ENCODE measurements at regions of chr9 and their contacts with region 1.

Region 1: DNA sequence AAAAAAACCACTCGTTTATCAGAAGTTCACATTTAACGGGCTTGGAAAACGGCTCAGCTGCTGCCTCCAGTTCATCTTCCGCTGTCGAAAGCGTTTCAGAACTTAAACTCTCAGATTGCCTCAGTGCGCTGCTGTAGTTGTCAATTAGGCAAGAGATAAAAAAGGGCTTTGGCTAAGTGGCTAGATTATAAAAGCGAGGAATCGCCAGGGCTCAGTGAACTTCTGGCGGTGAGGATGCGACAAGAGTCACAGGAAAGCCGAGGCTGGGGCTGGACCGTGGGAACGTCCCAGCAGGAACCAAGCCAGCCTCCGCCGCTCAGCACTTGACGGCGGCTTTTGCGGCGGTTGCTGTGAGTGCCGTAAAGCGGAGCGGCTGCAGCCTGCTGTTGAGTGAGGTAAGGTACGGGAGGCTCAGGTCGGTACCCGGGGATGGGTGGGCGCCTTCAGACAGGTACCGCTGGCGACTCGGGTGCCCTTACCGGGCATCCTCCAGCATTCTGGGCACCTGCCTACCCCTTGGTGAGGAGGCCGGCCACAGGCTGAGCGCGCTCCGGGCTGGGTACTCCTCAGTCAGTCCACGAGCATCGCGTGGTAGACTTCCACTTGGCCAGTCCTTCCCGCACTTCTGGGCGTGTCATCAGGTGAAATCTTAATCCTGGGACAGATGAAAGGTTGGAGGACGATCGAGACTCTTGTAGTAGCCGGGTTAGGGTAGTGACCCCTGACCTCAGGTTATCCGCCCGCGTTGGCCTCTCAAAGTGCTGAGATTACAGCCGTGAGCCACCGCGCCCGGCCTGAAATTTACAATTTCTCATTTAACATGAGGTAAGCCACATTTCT is at the start of gene FKTN:
- DNase-seq: peak; percentile 90
- ATAC-seq: peak; percentile 98
- H3K4me3 Mint-ChIP-seq: peak within 1 kb of the TSS; percentile 94
- H3K27ac Mint-ChIP-seq: peak within 1 kb of the TSS; percentile 84
- H3K4me1 Mint-ChIP-seq: peaks cover 16% of the 10 kb centered on the region
- H3K27me3 Mint-ChIP-seq: no peaks in the 10 kb centered on the region
- CTCF ChIP-seq: no peak
- total RNA-seq, gene FKTN: 13.9 to 14.3 TPM

Region 2: GRCh38 chr9:105447814-105448812 is 109.9 kb before region 1 on chr9 and contains the start of gene FSD1L:
- CTCF ChIA-PET with region 1: no interaction called
- POLR2A ChIA-PET with region 1: no interaction called
- intact Hi-C with region 1: loop called (anchors 10 kb)
- DNase-seq: peak; percentile 86
- ATAC-seq: peak; percentile 93
- H3K4me3 Mint-ChIP-seq: peak within 1 kb of the TSS; percentile 78
- H3K27ac Mint-ChIP-seq: no peak within 1 kb of the TSS
- H3K4me1 Mint-ChIP-seq: peaks cover 11% of the 10 kb centered on the region
- H3K27me3 Mint-ChIP-seq: peaks cover 4% of the 10 kb centered on the region
- CTCF ChIP-seq: no peak
- total RNA-seq, gene FSD1L: 1.3 TPM

Measured in activated CD8-positive, alpha-beta T cell treated with anti-CD3 and anti-CD28 coated beads for 36 hours (primary cell).